ENCODE measurements at regions of chr17 and their contacts with region 1.

Region 1: DNA sequence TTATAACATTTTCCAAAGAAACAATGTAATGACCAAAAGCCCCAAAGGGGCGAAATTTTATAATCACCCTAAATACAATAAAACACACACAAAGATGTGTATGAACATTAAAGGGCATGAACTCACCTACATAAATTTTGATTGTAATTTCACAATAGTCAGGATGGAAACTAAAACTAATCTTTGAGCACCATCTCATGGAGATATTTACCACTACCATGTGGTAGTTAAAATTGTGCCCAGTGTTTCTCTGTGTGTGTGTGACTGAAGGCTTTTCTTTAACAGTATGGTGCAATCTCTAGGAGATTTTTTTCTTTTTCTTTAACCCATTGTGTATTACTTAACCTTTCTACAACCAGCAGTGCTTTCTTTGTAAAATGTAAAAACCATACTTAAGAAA is 19.7 kb upstream of the MEIOC start:
- DNase-seq: no peak
- ATAC-seq: peak; percentile 68 to 76

Region 2: GRCh38 chr17:44344939-44345453 is 291.6 kb before region 1 on chr17 and contains the start of gene GRN:
- intact Hi-C with region 1: no loop called
- DNase-seq: peak; percentile 93
- ATAC-seq: peak; percentile 99
- total RNA-seq, gene GRN: 190 to 206 TPM

Region 3: GRCh38 chr17:44533533-44534246 is 102.9 kb before region 1 on chr17:
- intact Hi-C with region 1: loop called (anchors 1 to 5 kb)
- DNase-seq: peak; percentile 90
- ATAC-seq: peak; percentile 92 to 93

Region 4: DNA sequence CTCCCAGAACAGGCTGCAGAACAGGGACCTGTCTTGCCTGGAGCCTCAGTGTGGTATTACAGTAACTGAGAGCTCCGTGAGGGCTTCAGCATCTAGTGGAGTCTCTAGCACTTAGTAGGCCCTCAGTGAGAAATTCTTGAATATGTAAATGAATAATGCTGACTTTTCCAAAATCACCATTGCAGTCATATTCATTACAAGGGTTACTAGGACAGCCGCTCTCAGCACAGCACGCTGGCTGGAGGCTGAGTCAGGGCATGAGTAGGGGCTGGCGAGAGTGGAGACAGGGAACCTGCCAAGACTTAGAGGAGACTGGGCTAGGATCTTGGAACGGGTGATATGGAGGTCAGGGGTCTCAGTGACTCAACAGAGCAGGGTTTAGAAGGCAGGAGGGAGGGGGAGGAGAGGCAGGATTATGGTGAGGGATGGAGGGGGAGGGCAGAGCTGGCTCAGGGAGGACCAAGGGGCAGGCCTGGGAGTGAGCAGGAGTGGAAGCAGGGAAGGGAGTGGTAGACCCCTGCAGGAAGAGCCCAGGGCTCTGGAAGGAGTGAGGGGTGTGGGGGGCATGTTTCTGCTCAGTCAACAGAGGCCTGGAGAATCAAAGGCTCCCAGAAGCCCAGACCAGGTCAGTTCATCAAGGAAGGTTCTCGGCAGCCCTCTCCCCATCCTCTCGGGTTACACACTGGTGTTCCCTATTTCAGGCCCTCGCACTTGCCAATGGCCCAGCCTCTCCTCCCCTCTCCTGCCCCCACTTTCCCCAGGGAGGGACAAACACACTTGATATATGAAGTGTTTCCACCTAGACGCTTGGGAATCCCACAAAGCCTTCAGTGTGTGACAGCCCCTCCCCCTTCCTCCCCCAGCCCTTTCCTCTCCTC is 37.0 kb before region 1 on chr17:
- intact Hi-C with region 1: no loop called
- DNase-seq: peak; percentile 68
- ATAC-seq: peak; percentile 98 to 99